A549 (cell line): ENCODE measurements at regions of chr17 and their contacts with region 1.

Region 1: DNA sequence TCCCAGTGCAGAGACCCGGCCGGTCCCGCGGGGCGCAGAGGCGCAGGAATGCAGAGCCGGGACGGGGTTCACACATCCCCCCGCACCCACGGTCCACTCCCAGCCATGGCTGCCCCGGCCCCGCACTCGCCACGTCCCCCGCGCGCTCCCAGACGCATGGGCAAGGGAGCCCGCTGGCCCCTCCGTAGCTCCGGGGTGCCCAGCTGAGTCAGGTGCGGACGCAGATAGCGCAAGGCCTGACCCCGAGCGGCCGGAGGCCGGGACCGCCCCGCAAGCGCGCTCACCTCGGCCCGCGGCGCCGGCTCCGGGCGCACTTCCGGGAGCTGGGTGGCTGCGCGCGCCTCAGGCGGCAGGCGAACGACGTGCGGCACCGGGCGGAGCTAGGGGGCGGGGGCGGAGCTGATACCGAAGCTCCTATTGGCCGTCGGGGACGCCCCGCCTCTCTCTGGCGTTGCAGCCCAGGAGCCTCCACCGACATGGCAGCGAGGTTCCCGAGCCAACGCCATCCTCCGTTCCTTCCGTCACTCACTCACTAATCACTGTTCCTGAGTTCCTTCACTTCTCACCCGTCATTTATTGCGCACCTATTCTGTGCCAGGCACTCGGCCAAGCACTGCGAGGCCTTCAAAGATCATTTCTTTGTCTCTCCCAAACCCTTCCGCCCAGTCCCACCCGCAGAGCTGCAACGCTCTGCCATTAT is at the start of gene ZNF18:
- DNase-seq: peak; percentile 95 to 96
- ATAC-seq: peak; percentile 94 to 99
- H3K4me3 ChIP-seq: peak within 1 kb of the TSS; percentile 70
- H3K27ac ChIP-seq: peak within 1 kb of the TSS; percentile 88 to 94
- H3K4me1 ChIP-seq: peaks cover 8% of the 10 kb centered on the region
- CTCF ChIP-seq: no peak
- EP300 ChIP-seq: no peak
- POLR2A ChIP-seq: peak; percentile 100
- RAD21 ChIP-seq: 0 out of 5 replicates have a peak, but pooled peaks of 1 of the 2 experiments have one; percentile 16
- polyA plus RNA-seq, gene ZNF18: 12.3 and 12.6 TPM in 2 replicates

Region 2: GRCh38 chr17:11980813-11981212 is 16.5 kb before region 1 on chr17:
- CTCF ChIA-PET with region 1: interaction called, 24 read pairs
- POLR2A ChIA-PET with region 1: interaction called, 12 read pairs
- DNase-seq: no peak
- ATAC-seq: no peak
- H3K4me3 ChIP-seq: no peak overlapping the region
- H3K27ac ChIP-seq: no peak overlapping the region
- H3K4me1 ChIP-seq: no peaks in the 10 kb centered on the region
- CTCF ChIP-seq: peak; percentile 15; the same call in 1 of the 3 replicates
- EP300 ChIP-seq: no peak
- POLR2A ChIP-seq: no peak
- RAD21 ChIP-seq: no peak

Region 3: GRCh38 chr17:12007466-12007865 is 10.2 kb after region 1 on chr17:
- CTCF ChIA-PET with region 1: interaction called, 9 read pairs
- POLR2A ChIA-PET with region 1: interaction called, 51 read pairs
- DNase-seq: no peak
- ATAC-seq: no peak
- H3K4me3 ChIP-seq: no peak overlapping the region
- H3K27ac ChIP-seq: no peak overlapping the region
- H3K4me1 ChIP-seq: no peaks in the 10 kb centered on the region
- CTCF ChIP-seq: no peak
- EP300 ChIP-seq: no peak
- POLR2A ChIP-seq: no peak
- RAD21 ChIP-seq: no peak

Region 4: DNA sequence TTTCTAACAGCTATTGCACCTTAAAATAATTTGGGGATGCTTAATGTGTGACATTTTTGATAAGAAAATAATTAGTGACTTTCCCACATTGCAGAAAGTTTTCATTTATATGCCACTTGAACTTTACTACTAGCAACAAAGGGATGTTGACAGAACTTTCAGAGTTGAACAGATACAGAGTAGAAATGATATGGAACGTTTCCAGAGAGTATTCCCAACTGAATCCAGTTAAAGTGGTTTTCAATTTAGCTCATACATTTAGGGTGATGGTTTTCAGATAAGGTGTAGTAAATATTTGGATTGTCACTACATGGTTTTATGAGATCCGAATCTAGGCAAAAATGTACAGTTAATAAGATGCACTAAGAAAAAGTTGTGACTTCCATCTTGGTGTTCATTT is 40.7 kb after region 1 on chr17:
- CTCF ChIA-PET with region 1: no interaction called
- POLR2A ChIA-PET with region 1: interaction called, 13 read pairs
- DNase-seq: no peak
- ATAC-seq: no peak
- H3K4me3 ChIP-seq: no peak overlapping the region
- H3K27ac ChIP-seq: no peak overlapping the region
- H3K4me1 ChIP-seq: peaks cover 36% of the 10 kb centered on the region
- CTCF ChIP-seq: no peak
- EP300 ChIP-seq: no peak
- POLR2A ChIP-seq: no peak
- RAD21 ChIP-seq: no peak

Region 5: DNA sequence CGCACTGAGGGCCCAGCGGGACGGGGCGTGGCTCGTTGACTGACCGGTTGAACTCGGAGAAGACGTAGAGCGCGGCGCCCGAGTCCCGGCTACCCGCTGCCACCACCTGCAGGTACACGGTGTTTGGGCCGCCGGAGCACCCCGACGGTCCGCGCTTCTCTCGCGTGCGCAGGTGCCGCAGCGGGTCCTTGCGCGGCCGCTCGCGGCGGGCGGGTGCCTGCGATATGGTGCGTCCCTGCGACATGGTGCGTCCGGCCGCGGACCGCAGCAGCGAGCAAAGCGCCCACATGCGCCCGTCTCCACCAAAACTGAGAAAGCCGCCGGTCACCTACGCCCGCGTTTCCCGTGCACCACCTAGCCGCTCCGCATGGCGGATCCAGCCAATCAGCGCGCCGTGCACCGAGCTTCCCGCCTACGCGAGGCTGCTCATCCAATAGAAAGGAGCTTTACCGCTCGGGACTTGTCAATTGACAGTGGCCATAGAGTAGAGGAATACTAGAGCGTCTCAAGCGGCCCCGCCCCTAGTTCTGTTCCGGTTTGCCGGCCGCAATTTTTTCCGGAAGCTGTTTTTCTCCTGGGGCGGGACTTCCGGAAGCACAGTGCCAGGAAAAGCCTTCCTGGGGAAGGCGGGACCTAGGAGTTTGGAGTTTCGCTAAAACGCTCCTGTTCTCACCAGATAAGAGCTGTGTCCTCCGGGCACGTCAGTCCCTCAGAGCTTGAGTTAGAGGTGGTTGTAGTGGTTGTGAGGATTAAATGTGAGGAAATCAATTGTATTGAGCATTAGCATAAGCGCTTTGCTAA is 1020.6 kb after region 1 on chr17 and contains the start of gene ELAC2:
- CTCF ChIA-PET with region 1: no interaction called
- POLR2A ChIA-PET with region 1: interaction called, 18 read pairs
- DNase-seq: peak; percentile 98 to 99
- ATAC-seq: peak; percentile 96 to 99
- H3K4me3 ChIP-seq: peak within 1 kb of the TSS; percentile 80
- H3K27ac ChIP-seq: peak within 1 kb of the TSS; percentile 85 to 91
- H3K4me1 ChIP-seq: peaks cover 13% of the 10 kb centered on the region
- CTCF ChIP-seq: no peak
- EP300 ChIP-seq: no peak
- POLR2A ChIP-seq: peak; percentile 90
- RAD21 ChIP-seq: no peak
- polyA plus RNA-seq, gene ELAC2: 97.9 and 103 TPM in 2 replicates